Posterior vena cava (tissue), 2 donors: ENCODE measurements at regions of chr1 and their contacts with region 1.

Region 1: DNA sequence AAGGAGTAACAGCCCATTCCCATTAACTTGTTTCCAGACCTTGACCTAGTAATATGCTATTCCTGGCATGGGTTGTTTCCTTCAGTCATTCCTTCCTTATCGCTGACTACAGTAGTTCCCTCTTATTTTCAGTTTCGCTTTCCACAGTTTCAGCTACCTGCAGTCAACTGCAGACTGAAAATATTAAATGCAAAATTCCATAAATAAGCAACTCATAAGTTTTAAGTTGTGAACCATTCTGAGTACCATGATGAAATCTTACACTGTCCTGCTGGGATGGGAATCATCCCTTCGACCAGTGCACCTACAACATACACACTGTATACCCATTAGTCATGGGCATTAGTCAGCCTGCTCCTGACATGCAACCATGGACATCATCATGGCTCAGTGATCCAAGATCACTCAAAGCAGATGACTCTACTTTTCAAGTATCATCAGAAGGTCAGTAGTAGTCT is 66.7 kb downstream of the CCDC30 start:
- DNase-seq: no peak

Region 2: DNA sequence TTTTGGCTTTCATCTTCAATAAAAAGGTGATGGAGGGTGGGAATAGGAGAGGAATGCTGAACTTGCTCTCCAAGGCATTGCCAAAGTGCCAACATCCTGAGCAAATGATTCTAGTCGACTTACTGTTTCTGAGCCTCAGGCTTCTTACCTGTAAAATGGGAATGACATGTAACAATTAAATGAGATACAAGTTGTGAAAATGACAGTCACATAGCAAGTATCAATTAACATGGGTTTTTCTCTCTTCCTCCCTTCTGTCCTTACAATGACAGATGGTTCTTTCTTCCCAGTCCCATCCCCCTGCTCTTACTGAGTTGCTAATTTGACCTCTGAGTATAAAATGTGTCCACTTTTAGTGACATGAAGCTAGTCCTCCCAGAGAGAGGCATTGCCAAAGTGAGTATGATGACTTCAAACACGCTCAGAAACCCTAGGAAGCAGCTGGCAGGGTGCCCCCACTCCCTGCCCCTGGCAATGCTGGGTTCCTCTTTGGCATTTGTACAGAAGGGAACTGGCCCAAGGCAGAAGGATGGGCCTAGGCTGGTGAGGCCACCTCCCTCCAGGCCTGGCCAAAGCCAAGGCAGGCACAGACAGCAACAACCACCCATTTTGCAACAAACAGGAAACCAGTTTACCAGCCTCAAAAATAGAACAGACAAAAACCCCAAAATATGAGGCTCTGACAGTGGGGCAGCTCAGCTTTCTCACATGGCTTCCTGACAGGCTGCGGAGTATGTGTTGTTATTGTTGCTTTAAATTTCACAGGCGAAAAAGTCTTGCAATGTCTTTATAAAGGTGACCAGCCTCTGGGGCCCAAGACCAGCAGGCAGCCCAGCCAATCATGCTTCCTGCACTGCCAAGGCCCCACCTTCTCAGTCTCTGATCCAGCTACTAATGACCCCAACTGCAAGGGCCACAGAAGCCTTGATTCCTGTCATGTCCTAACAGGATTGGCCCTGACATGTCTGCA is 726.9 kb before region 1 on chr1:
- intact Hi-C with region 1: loop called in 1 of 2 experiments (anchors 10 kb)
- DNase-seq: peak; percentile 91